T-cell (primary cell): ENCODE measurements at regions of chr2 and their contacts with region 1.

Region 1: GRCh38 chr2:152676461-152676860 is 40.8 kb downstream of the PRPF40A start:
- DNase-seq: no peak
- ATAC-seq: no peak
- H3K4me3 ChIP-seq: no peak overlapping the region
- H3K4me3 Mint-ChIP-seq: no peak overlapping the region
- H3K27ac ChIP-seq: no peak overlapping the region
- H3K27ac Mint-ChIP-seq: no peak overlapping the region
- H3K4me1 ChIP-seq: no peaks in the 10 kb centered on the region
- H3K4me1 Mint-ChIP-seq: peaks cover 0 to under 1% (median under 1%) of the 10 kb centered on the region in 3 donors
- H3K27me3 ChIP-seq: no peaks in the 10 kb centered on the region
- H3K27me3 Mint-ChIP-seq: no peaks in the 10 kb centered on the region

Region 2: DNA sequence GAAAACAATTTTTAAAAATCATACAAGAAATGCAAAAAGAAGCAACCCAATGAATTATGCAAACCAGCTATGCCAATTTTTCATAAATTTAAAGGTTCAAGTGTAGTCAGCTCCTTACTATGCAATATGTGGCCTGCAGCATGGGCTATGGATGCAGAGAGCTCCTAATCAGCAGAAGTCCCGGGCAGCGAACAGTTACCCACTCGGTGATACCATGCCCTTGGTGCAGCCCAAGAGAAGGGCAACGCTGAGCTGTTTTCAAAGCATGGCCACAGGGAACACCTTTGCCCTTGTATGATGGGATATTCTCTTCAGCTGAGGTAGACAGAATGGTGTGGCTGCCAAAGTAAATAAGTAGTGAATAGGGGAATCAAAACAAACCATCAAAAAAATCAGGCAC is 831.0 kb before region 1 on chr2:
- CTCF ChIA-PET with region 1: no interaction called
- POLR2A ChIA-PET with region 1: interaction called in 1 of 2 experiments, 10 read pairs
- DNase-seq: no peak
- ATAC-seq: no peak
- H3K4me3 ChIP-seq: no peak overlapping the region
- H3K4me3 Mint-ChIP-seq: no peak overlapping the region
- H3K27ac ChIP-seq: no peak overlapping the region
- H3K27ac Mint-ChIP-seq: no peak overlapping the region
- H3K4me1 ChIP-seq: no peaks in the 10 kb centered on the region
- H3K4me1 Mint-ChIP-seq: peaks cover 0 to 3% (median 0%) of the 10 kb centered on the region in 3 donors
- H3K27me3 ChIP-seq: no peaks in the 10 kb centered on the region
- H3K27me3 Mint-ChIP-seq: peaks cover 0 to 7% of the 10 kb centered on the region in 2 donors